Mammary epithelial cell (primary cell): ENCODE measurements at regions of chr11 and their contacts with region 1.

Region 1: DNA sequence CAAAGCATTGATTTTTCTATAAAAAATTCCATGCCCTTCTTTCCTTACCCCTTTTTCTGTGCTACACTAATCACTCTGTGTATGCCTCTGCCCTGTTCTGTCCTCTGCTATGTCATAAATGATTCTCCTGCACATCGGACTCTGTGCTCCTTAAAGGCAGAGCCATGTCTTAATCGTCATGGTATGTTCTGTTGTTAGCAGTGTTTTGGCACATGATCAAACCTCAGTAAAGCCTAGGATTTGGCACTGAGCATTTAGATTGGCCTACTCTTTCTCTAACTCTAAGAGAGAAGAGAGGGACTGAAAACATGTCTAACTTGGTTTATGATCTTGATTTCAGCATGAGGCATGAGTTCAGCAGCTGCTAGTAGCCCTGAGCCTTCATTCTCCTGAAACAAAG is 266.9 kb downstream of the AASDHPPT start:
- DNase-seq: peak; percentile 5
- H3K4me3 ChIP-seq: no peak overlapping the region
- H3K27ac ChIP-seq: no peak overlapping the region
- H3K4me1 ChIP-seq: no peaks in the 10 kb centered on the region
- H3K27me3 ChIP-seq: no peaks in the 10 kb centered on the region
- CTCF ChIP-seq: no peak

Region 2: DNA sequence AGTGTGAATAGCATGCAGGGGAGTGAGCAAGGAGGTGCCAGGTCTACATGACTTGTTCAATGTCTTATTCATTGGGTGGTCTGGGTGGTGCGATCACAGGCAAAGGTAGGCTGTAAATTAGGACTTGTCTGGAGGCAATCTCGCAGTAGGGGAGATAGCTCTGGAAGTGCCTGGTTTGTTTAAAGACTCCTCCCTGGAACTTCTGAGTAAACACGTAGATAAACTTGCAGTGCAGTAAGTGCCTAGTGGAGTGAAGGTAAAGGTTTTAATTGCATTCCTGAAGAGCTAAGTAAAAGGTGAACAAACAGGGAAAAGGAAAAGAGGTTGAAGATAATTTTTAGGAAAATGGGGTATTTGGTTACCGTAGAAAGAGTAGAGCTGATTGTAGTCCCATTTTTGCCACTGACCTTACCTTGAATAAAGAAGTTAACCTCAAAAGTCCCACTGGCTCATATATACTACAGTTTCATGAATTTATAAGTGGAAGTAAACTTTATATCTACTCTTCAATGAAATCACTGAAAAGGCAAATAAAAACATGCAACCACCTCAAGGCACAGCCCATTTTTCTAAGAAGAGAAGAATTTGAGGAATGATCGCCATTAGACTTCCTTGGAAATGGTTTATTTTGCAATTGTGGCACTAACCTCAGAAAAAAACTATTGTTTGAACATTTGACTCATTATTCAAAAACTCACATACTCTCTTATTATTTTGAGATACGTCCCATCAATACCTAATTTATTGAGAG is 222.6 kb before region 1 on chr11:
- CTCF ChIA-PET with region 1: no interaction called
- dilution Hi-C with region 1: no loop called
- in situ Hi-C with region 1: no loop called
- intact Hi-C with region 1: no loop called
- DNase-seq: no peak
- H3K4me3 ChIP-seq: no peak overlapping the region
- H3K27ac ChIP-seq: no peak overlapping the region
- H3K4me1 ChIP-seq: no peaks in the 10 kb centered on the region
- H3K27me3 ChIP-seq: peaks cover 8% of the 10 kb centered on the region
- CTCF ChIP-seq: no peak

Region 3: GRCh38 chr11:106456647-106457046 is 112.3 kb after region 1 on chr11:
- CTCF ChIA-PET with region 1: no interaction called
- dilution Hi-C with region 1: no loop called
- in situ Hi-C with region 1: no loop called
- intact Hi-C with region 1: no loop called
- DNase-seq: peak; percentile 70
- H3K4me3 ChIP-seq: no peak overlapping the region
- H3K27ac ChIP-seq: peak overlapping the region; percentile 74
- H3K4me1 ChIP-seq: peaks cover 16% of the 10 kb centered on the region
- H3K27me3 ChIP-seq: no peaks in the 10 kb centered on the region
- CTCF ChIP-seq: no peak

Region 4: GRCh38 chr11:107043242-107044006 is 699.0 kb after region 1 on chr11:
- CTCF ChIA-PET with region 1: no interaction called
- dilution Hi-C with region 1: no loop called
- in situ Hi-C with region 1: loop called in 1 of 2 experiments (anchors 25 kb)
- intact Hi-C with region 1: no loop called
- DNase-seq: peak; percentile 87
- H3K4me3 ChIP-seq: no peak overlapping the region
- H3K27ac ChIP-seq: no peak overlapping the region
- H3K4me1 ChIP-seq: peaks cover 16% of the 10 kb centered on the region
- H3K27me3 ChIP-seq: peaks cover 5% of the 10 kb centered on the region
- CTCF ChIP-seq: no peak